ENCODE measurements at regions of chr14 and their contacts with region 1.

Region 1: DNA sequence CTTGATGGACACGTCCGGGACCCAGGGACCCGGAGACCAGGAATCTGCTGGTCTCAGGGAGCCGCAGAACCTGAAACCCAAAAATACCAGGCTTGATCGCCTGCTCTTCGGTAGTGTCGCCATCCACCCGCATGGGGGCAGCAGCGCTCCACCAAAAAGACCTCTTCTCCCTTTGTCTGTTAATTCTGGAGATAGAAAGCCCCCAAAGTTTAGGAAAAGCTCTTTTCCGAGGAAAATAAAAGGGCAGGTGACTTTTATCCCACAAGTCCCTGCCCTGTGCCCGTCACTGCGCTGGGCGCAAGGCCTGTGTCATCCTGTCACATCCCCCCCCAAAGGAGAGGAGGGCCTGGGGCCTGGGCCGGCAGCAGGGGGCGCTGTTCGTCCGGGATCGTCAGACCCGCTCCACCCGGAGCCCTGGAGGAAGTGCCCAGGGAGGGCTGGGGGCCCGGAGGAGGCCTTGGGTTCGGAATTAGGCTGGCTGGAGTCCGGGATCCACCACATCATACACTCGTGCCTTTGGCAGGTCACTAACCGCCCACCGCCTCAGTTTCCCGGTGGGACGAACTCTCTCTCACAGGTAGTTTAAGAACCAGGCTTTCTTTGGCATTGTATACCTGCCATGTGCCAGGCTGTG is 31.9 kb downstream of the DAD1 start:
- DNase-seq: peak; percentile 87 to 96 (median 91)
- H3K4me3 ChIP-seq: peak overlapping the region; percentile 80 to 85
- H3K4me3 Mint-ChIP-seq: peak overlapping the region; percentile 77 to 96 (median 88)
- H3K27ac ChIP-seq: peak overlapping the region; percentile 97
- H3K27ac Mint-ChIP-seq: peak overlapping the region; percentile 98 to 100 (median 100)
- H3K4me1 ChIP-seq: peaks cover 97% of the 10 kb centered on the region
- H3K4me1 Mint-ChIP-seq: peaks cover 75 to 97% (median 86%) of the 10 kb centered on the region in 4 donors
- H3K27me3 ChIP-seq: no peaks in the 10 kb centered on the region
- H3K27me3 Mint-ChIP-seq: peaks cover 2 to 4% of the 10 kb centered on the region in 2 donors

Region 2: GRCh38 chr14:21840765-21841164 is 716.3 kb before region 1 on chr14:
- CTCF ChIA-PET with region 1: interaction called, 18 read pairs
- POLR2A ChIA-PET with region 1: interaction called, 11 read pairs
- intact Hi-C with region 1: loop called (anchors 2 kb)
- DNase-seq: peak in 4 of 5 donors; percentile 17 to 39 (median 28)
- H3K4me3 ChIP-seq: no peak overlapping the region
- H3K4me3 Mint-ChIP-seq: peak overlapping the region; percentile 49 to 79 (median 69)
- H3K27ac ChIP-seq: no peak overlapping the region
- H3K27ac Mint-ChIP-seq: peak overlapping the region in 6 of 7 donors; percentile 39 to 96 (median 62)
- H3K4me1 ChIP-seq: peaks cover 3% of the 10 kb centered on the region
- H3K4me1 Mint-ChIP-seq: peaks cover 0 to 11% (median 2%) of the 10 kb centered on the region in 4 donors
- H3K27me3 ChIP-seq: no peaks in the 10 kb centered on the region
- H3K27me3 Mint-ChIP-seq: peaks cover 16 to 17% of the 10 kb centered on the region in 2 donors

Region 3: GRCh38 chr14:21940887-21941856 is 615.9 kb before region 1 on chr14:
- CTCF ChIA-PET with region 1: no interaction called
- POLR2A ChIA-PET with region 1: interaction called, 12 read pairs
- intact Hi-C with region 1: no loop called
- DNase-seq: peak; percentile 44 to 53 (median 47)
- H3K4me3 ChIP-seq: no peak overlapping the region
- H3K4me3 Mint-ChIP-seq: peak overlapping the region; percentile 65 to 86 (median 81)
- H3K27ac ChIP-seq: peak overlapping the region; percentile 26
- H3K27ac Mint-ChIP-seq: peak overlapping the region; percentile 31 to 88 (median 79)
- H3K4me1 ChIP-seq: peaks cover 13% of the 10 kb centered on the region
- H3K4me1 Mint-ChIP-seq: peaks cover 4 to 20% (median 15%) of the 10 kb centered on the region in 4 donors
- H3K27me3 ChIP-seq: no peaks in the 10 kb centered on the region
- H3K27me3 Mint-ChIP-seq: peaks cover 0 to 9% of the 10 kb centered on the region in 2 donors

Region 4: GRCh38 chr14:22147704-22148103 is 409.4 kb before region 1 on chr14:
- CTCF ChIA-PET with region 1: no interaction called
- POLR2A ChIA-PET with region 1: interaction called, 11 read pairs
- intact Hi-C with region 1: no loop called
- DNase-seq: no peak
- H3K4me3 ChIP-seq: no peak overlapping the region
- H3K4me3 Mint-ChIP-seq: peak overlapping the region in 7 of 8 donors; percentile 61 to 83 (median 70)
- H3K27ac ChIP-seq: no peak overlapping the region
- H3K27ac Mint-ChIP-seq: peak overlapping the region in 4 of 7 donors; percentile 17 to 48 (median 35)
- H3K4me1 ChIP-seq: no peaks in the 10 kb centered on the region
- H3K4me1 Mint-ChIP-seq: peaks cover 0 to 1% (median 0%) of the 10 kb centered on the region in 4 donors
- H3K27me3 ChIP-seq: no peaks in the 10 kb centered on the region
- H3K27me3 Mint-ChIP-seq: peaks cover 0 to 1% of the 10 kb centered on the region in 2 donors

Region 5: GRCh38 chr14:22418631-22419030 is 138.5 kb before region 1 on chr14:
- CTCF ChIA-PET with region 1: no interaction called
- POLR2A ChIA-PET with region 1: no interaction called
- intact Hi-C with region 1: no loop called
- DNase-seq: no peak
- H3K4me3 ChIP-seq: no peak overlapping the region
- H3K4me3 Mint-ChIP-seq: no peak overlapping the region
- H3K27ac ChIP-seq: no peak overlapping the region
- H3K27ac Mint-ChIP-seq: no peak overlapping the region
- H3K4me1 ChIP-seq: no peaks in the 10 kb centered on the region
- H3K4me1 Mint-ChIP-seq: no peaks in the 10 kb centered on the region
- H3K27me3 ChIP-seq: no peaks in the 10 kb centered on the region
- H3K27me3 Mint-ChIP-seq: no peaks in the 10 kb centered on the region

Region 6: GRCh38 chr14:22510527-22511110 is 46.5 kb before region 1 on chr14:
- CTCF ChIA-PET with region 1: interaction called, 15 read pairs
- POLR2A ChIA-PET with region 1: interaction called, 1,528 read pairs
- intact Hi-C with region 1: loop called (anchors 1 kb)
- DNase-seq: no peak
- H3K4me3 ChIP-seq: peak overlapping the region in 1 of 2 donors; percentile 29
- H3K4me3 Mint-ChIP-seq: peak overlapping the region; percentile 76 to 92 (median 89)
- H3K27ac ChIP-seq: peak overlapping the region; percentile 76
- H3K27ac Mint-ChIP-seq: peak overlapping the region; percentile 95 to 100 (median 98)
- H3K4me1 ChIP-seq: peaks cover 99% of the 10 kb centered on the region
- H3K4me1 Mint-ChIP-seq: peaks cover 56 to 93% (median 72%) of the 10 kb centered on the region in 4 donors
- H3K27me3 ChIP-seq: no peaks in the 10 kb centered on the region
- H3K27me3 Mint-ChIP-seq: no peaks in the 10 kb centered on the region

Region 7: GRCh38 chr14:22766456-22767322 is 209.6 kb after region 1 on chr14 and contains the start of gene OXA1L:
- CTCF ChIA-PET with region 1: interaction called, 3 read pairs
- POLR2A ChIA-PET with region 1: interaction called, 12 read pairs
- intact Hi-C with region 1: no loop called
- DNase-seq: peak; percentile 95 to 98 (median 98)
- H3K4me3 ChIP-seq: peak within 1 kb of the TSS; percentile 62 to 88
- H3K4me3 Mint-ChIP-seq: peak within 1 kb of the TSS; percentile 85 to 96 (median 94)
- H3K27ac ChIP-seq: peak within 1 kb of the TSS; percentile 88
- H3K27ac Mint-ChIP-seq: peak within 1 kb of the TSS; percentile 86 to 100 (median 98)
- H3K4me1 ChIP-seq: peaks cover 24% of the 10 kb centered on the region
- H3K4me1 Mint-ChIP-seq: peaks cover 26 to 39% (median 34%) of the 10 kb centered on the region in 4 donors
- H3K27me3 ChIP-seq: no peaks in the 10 kb centered on the region
- H3K27me3 Mint-ChIP-seq: no peaks in the 10 kb centered on the region
- total RNA-seq, gene OXA1L: 129 to 137 TPM

Region 8: DNA sequence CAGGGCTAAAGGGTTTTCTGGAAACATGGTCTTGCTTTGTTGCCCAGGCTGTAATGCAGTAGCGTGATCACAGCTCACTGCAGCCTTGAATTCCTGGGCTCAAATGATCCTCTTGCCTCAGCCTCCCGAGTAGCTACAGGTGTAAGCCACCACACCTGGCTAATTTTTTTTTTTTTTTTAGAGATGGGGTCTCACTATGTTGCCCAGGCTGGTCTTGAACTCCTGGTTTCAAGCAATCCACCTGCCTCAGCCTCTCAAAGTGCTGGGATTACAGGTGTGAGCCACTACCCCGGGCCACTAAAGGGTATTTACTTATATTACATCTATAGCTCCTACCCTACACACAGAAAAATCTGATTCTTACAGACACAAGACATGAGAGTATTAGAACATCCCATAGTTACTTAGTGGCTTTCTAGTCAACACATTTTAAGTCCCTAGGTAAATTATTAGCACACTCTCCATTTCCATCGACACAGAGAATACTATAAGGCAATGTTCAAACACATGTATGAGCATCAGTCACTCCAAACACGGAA is 1551.3 kb after region 1 on chr14:
- CTCF ChIA-PET with region 1: no interaction called
- POLR2A ChIA-PET with region 1: no interaction called
- intact Hi-C with region 1: no loop called
- DNase-seq: no peak
- H3K4me3 ChIP-seq: no peak overlapping the region
- H3K4me3 Mint-ChIP-seq: peak overlapping the region in 4 of 8 donors; percentile 30 to 64 (median 44)
- H3K27ac ChIP-seq: peak overlapping the region; percentile 45
- H3K27ac Mint-ChIP-seq: peak overlapping the region; percentile 82 to 96 (median 95)
- H3K4me1 ChIP-seq: peaks cover 18% of the 10 kb centered on the region
- H3K4me1 Mint-ChIP-seq: peaks cover 6 to 15% (median 12%) of the 10 kb centered on the region in 4 donors
- H3K27me3 ChIP-seq: no peaks in the 10 kb centered on the region
- H3K27me3 Mint-ChIP-seq: no peaks in the 10 kb centered on the region